CD8-positive, alpha-beta T cell (primary cell): ENCODE measurements at regions of chr18 and their contacts with region 1.

Region 1: DNA sequence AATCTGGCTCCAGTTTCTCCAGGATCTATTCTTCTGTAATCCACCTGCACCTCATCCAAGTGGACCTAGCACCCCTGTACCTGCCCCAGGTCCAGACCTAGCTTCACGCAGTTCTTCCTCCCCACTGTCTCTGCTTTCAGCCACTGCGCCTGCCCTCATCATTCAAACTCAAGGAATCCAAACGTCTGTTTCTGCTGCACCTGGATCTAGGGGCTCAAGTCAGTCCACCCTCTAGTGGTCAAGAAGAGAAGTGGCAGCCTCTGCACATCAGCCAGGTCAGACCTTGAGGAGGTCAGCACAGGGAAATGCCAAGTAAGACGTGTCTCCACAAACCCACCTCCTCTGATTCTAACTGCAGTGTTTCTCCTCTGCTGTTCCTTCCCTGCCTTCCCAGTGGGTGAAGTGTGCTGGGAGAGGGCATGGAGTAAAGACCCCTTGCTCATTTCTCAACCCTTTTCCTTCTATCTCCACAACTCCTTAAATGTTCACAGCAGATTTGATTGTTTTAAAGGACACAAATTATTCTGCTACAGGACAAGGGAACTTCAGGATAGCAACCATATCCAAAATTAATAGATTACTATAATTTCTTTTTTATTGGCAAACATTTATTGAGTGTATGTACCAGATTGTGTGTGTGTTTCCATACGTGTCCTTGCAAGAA is 8.6 kb upstream of the RNF152 start:
- DNase-seq: peak in 7 of 9 experiments; percentile 24 to 65 (median 44)
- ATAC-seq: peak; percentile 90
- H3K4me3 ChIP-seq: no peak overlapping the region
- H3K4me3 Mint-ChIP-seq: no peak overlapping the region
- H3K27ac ChIP-seq: no peak overlapping the region
- H3K27ac Mint-ChIP-seq: no peak overlapping the region
- H3K4me1 ChIP-seq: no peaks in the 10 kb centered on the region
- H3K4me1 Mint-ChIP-seq: no peaks in the 10 kb centered on the region
- H3K27me3 ChIP-seq: no peaks in the 10 kb centered on the region
- H3K27me3 Mint-ChIP-seq: peaks cover 29% of the 10 kb centered on the region
- CTCF ChIP-seq: peak; percentile 85

Region 2: DNA sequence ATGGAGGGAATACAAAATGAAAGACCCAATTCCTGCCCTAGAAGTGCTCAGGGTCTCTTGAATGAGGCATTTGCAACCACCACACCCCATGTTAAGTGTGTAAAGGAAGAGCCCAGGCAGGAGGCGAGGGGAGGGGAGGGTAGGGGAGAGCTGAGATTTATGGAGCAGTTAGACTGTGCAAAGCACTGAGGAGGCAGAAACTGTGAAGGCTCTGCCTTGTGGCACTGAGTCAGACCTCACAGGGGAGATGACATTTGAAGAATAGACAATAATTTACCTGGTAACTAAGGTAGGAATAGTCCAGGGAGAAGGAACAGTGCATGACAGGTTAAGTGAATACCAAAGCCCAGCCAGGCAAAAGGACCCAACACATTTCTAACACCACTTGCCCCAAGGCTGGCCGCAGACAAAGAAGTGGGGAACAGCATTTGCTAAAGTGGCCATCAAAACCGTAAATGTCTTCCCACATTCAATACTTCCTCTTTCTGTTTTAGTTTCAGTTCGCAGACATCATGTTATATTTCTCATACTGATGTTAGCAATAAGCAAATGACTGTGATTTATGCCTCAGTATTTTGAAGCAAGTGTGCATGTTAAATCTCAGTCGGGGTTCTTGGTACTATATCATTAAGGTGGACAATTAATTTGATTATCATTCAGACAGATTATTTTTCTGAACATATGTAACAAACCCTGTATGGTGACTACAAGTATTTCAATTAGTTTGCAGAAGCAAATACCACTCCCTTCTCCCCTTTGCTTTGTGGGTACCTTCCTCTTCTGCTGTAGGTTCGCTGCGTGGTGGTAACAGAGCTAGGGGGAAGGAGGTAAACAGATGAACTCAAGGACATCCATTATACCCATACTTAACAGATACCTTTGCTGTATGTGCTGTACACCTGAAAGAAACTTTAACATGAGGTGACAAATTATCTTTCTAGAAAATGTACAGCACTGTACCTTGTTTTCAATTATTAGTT is 540.8 kb before region 1 on chr18:
- CTCF ChIA-PET with region 1: no interaction called
- POLR2A ChIA-PET with region 1: no interaction called
- intact Hi-C with region 1: no loop called
- DNase-seq: no peak
- ATAC-seq: no peak
- H3K4me3 ChIP-seq: no peak overlapping the region
- H3K4me3 Mint-ChIP-seq: no peak overlapping the region
- H3K27ac ChIP-seq: no peak overlapping the region
- H3K27ac Mint-ChIP-seq: no peak overlapping the region
- H3K4me1 ChIP-seq: no peaks in the 10 kb centered on the region
- H3K4me1 Mint-ChIP-seq: peaks cover 6% of the 10 kb centered on the region
- H3K27me3 ChIP-seq: no peaks in the 10 kb centered on the region
- H3K27me3 Mint-ChIP-seq: no peaks in the 10 kb centered on the region
- CTCF ChIP-seq: no peak

Region 3: DNA sequence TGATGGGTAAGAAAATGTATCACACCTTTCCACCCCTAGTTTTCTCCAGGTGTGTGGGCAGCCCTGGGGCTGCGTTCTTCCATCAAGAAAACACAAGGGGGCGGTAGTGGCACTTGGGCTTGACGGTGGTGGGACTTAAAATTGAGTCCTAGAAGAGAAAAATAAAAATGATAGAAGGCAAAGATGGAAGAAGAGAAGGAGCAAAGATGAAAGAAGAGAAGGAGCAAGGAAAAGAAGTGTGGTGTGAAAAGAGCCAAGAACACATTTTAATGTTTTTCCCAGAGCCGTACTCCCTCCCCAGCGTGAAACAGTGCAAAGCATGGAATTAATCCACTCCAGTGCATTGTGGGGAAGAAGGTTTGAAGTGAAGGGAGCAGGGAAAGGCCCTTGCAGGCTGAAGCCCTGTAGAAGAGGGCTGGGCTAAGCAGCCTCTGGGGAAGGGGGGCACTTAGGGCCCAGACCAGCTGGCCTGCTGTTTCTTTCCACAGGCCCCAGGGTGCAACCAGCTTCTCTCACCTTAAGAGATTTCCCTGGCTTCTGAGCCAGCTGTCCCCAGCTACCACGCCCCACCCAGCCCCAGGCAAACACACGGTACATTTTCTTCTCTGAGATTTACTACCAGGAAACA is 265.4 kb before region 1 on chr18:
- CTCF ChIA-PET with region 1: interaction called, 3 read pairs
- POLR2A ChIA-PET with region 1: no interaction called
- intact Hi-C with region 1: loop called in 1 of 2 experiments (anchors 5 kb)
- DNase-seq: peak in 4 of 9 experiments; percentile 15 to 46 (median 30)
- ATAC-seq: no peak
- H3K4me3 ChIP-seq: no peak overlapping the region
- H3K4me3 Mint-ChIP-seq: no peak overlapping the region
- H3K27ac ChIP-seq: no peak overlapping the region
- H3K27ac Mint-ChIP-seq: no peak overlapping the region
- H3K4me1 ChIP-seq: no peaks in the 10 kb centered on the region
- H3K4me1 Mint-ChIP-seq: no peaks in the 10 kb centered on the region
- H3K27me3 ChIP-seq: no peaks in the 10 kb centered on the region
- H3K27me3 Mint-ChIP-seq: peaks cover 12% of the 10 kb centered on the region
- CTCF ChIP-seq: peak; percentile 59

Region 4: DNA sequence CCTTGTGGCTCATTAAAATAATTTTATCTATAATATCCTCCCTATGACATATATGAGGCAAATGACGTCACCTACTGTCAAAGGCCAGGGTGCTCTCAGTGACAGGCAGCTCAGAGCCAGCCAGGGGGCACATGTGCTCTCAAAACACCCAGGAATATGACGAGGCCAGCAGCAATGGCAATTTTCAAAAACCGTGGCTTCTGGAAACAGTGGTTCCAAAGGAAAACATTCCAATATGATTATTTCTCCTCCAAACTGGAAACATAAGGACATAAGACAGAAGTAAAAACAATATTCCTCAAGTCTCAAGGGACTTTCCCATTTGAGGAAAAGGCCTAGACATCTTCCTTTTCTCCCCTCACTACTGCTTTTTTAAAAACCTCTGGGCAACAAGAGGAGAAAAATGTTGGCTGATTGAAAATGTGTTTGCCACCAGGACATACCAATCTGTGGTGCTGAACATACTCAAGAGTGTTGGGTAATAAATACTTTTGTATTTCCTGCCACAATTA is 49.5 kb before region 1 on chr18:
- CTCF ChIA-PET with region 1: no interaction called
- POLR2A ChIA-PET with region 1: no interaction called
- intact Hi-C with region 1: no loop called
- DNase-seq: no peak
- ATAC-seq: no peak
- H3K4me3 ChIP-seq: no peak overlapping the region
- H3K4me3 Mint-ChIP-seq: no peak overlapping the region
- H3K27ac ChIP-seq: no peak overlapping the region
- H3K27ac Mint-ChIP-seq: no peak overlapping the region
- H3K4me1 ChIP-seq: no peaks in the 10 kb centered on the region
- H3K4me1 Mint-ChIP-seq: no peaks in the 10 kb centered on the region
- H3K27me3 ChIP-seq: no peaks in the 10 kb centered on the region
- H3K27me3 Mint-ChIP-seq: peaks cover 5% of the 10 kb centered on the region
- CTCF ChIP-seq: no peak

Region 5: GRCh38 chr18:62279561-62279960 is 378.1 kb after region 1 on chr18:
- CTCF ChIA-PET with region 1: no interaction called
- POLR2A ChIA-PET with region 1: no interaction called
- intact Hi-C with region 1: no loop called
- DNase-seq: no peak
- ATAC-seq: no peak
- H3K4me3 ChIP-seq: no peak overlapping the region
- H3K4me3 Mint-ChIP-seq: no peak overlapping the region
- H3K27ac ChIP-seq: no peak overlapping the region
- H3K27ac Mint-ChIP-seq: no peak overlapping the region
- H3K4me1 ChIP-seq: no peaks in the 10 kb centered on the region
- H3K4me1 Mint-ChIP-seq: no peaks in the 10 kb centered on the region
- H3K27me3 ChIP-seq: no peaks in the 10 kb centered on the region
- H3K27me3 Mint-ChIP-seq: no peaks in the 10 kb centered on the region
- CTCF ChIP-seq: no peak